Activated CD4-positive, alpha-beta memory T cell treated with anti-CD3 and anti-CD28 coated beads, Interleukin-2, amount 10 ng/mL, durations not matched to agents 7 days and 5 days (primary cell): ENCODE measurements at regions of chr2 and their contacts with region 1.

Region 1: GRCh38 chr2:191150600-191151330 is at the start of gene STAT4:
- DNase-seq: peak; percentile 84
- H3K4me3 Mint-ChIP-seq: peak within 1 kb of the TSS; percentile 94
- H3K27ac Mint-ChIP-seq: peak within 1 kb of the TSS; percentile 97
- H3K4me1 Mint-ChIP-seq: peaks cover 75% of the 10 kb centered on the region
- H3K27me3 Mint-ChIP-seq: no peaks in the 10 kb centered on the region
- total RNA-seq, gene STAT4: 122 to 124 TPM

Region 2: DNA sequence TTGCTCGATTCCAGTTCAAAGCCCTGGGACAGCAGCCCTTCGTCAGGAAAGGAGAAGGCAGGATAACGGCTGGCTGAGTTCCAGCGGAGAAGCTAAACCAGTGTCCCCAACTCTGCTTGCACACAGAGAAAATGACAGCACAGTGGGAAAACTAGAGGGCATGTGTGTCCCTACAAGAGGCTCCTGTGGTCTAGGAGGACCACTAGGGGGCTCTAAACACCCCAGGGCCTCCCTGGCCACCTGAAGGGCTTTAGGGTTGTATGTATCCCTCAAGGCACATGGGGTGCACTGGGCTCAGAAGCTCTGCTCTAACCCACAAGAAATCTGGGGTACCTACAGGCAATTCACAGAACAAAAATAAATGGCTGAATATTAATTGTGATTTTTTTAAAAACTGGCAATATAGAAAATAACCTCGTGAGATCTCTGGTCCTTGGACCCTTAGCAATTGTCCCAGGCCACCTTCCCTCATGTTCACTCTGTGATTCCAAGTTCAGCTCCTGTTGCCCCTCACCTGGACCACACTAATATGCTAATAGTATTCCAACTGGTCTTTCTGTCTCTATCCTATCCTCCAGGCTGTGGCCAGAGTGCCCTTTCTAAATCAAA is 154.3 kb before region 1 on chr2:
- CTCF ChIA-PET with region 1: interaction called, 10 read pairs
- POLR2A ChIA-PET with region 1: no interaction called
- DNase-seq: peak; percentile 34
- H3K4me3 Mint-ChIP-seq: no peak overlapping the region
- H3K27ac Mint-ChIP-seq: peak overlapping the region; percentile 71
- H3K4me1 Mint-ChIP-seq: peaks cover 80% of the 10 kb centered on the region
- H3K27me3 Mint-ChIP-seq: no peaks in the 10 kb centered on the region

Region 3: DNA sequence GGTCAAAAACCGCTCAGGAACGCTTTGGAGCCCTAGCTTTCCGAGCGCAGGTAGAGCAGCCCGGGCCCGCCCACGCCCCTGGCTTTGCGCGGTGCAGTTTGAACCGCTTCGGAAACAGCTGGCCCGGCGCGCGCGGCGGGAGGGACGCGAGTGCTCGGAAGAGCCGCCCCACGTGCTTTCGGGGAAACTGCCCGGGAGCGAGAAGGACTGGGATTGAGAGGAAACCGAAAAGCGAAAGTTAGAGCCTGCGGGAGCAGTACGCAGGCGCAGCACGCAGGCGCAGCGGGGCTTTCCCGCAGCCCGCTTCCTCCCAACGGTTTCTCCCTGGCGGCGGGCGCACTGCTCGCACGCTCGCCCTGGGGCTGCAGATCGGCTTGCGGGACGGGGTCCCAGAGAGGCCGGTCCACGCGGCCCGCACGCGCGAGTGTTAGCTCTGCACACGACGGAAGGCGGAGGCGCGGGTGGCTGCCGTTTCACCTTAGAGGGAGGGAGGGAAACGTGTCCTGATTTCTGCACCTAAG is 130.5 kb before region 1 on chr2:
- CTCF ChIA-PET with region 1: interaction called, 10 read pairs
- POLR2A ChIA-PET with region 1: interaction called, 26 read pairs
- DNase-seq: peak; percentile 95
- H3K4me3 Mint-ChIP-seq: no peak overlapping the region
- H3K27ac Mint-ChIP-seq: no peak overlapping the region
- H3K4me1 Mint-ChIP-seq: peaks cover 41% of the 10 kb centered on the region
- H3K27me3 Mint-ChIP-seq: no peaks in the 10 kb centered on the region

Region 4: GRCh38 chr2:191038241-191038725 is 112.5 kb before region 1 on chr2:
- CTCF ChIA-PET with region 1: interaction called, 23 read pairs
- POLR2A ChIA-PET with region 1: interaction called, 6 read pairs
- DNase-seq: peak; percentile 69
- H3K4me3 Mint-ChIP-seq: peak overlapping the region; percentile 29
- H3K27ac Mint-ChIP-seq: peak overlapping the region; percentile 88
- H3K4me1 Mint-ChIP-seq: peaks cover 49% of the 10 kb centered on the region
- H3K27me3 Mint-ChIP-seq: no peaks in the 10 kb centered on the region

Region 5: DNA sequence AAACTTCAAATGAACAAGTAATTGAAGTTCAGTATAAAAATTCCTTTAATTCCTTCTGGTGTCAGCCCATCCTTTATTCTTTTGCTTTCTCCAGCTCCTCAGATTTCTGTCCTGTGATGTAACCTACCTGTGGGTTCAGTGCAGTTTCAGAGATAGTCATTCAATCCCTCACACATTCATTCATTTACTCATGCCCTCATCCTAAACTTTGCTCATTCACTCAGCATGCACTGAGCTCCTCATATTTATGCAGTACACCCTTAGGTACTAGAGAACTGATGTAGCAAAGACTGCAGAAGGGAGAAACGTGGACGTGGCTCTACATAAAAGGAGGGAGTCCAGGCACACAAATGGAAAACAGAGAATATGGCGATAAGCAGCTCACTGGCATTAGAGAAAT is 91.5 kb before region 1 on chr2:
- CTCF ChIA-PET with region 1: interaction called, 512 read pairs
- POLR2A ChIA-PET with region 1: interaction called, 165 read pairs
- DNase-seq: no peak
- H3K4me3 Mint-ChIP-seq: no peak overlapping the region
- H3K27ac Mint-ChIP-seq: no peak overlapping the region
- H3K4me1 Mint-ChIP-seq: peaks cover 72% of the 10 kb centered on the region
- H3K27me3 Mint-ChIP-seq: no peaks in the 10 kb centered on the region

Region 6: DNA sequence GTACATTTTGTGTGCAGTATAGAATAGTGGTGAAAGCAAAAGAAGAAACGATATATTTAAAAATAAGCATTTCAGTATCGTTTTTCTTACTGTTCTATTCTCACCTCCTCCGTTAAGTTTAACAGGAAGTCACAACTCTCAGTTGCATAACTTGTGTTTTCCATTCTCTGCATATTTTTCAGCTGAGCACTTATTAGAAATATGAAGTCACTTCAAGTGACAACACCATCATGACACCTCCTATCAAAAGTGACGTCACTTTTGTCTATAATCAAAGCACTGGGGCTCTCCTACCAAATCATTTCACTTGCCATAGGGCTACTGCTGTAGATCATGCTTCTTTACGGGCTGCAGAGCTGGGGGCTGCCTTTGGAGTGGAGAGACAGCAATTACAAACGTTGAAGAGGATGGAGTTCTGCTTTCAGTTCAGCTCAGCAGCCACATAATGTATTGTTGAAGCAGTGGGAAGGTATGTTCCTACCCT is 36.3 kb before region 1 on chr2:
- CTCF ChIA-PET with region 1: interaction called, 18 read pairs
- POLR2A ChIA-PET with region 1: interaction called, 64 read pairs
- DNase-seq: peak; percentile 39
- H3K4me3 Mint-ChIP-seq: peak overlapping the region; percentile 61
- H3K27ac Mint-ChIP-seq: peak overlapping the region; percentile 94
- H3K4me1 Mint-ChIP-seq: peaks cover 71% of the 10 kb centered on the region
- H3K27me3 Mint-ChIP-seq: no peaks in the 10 kb centered on the region

Region 7: DNA sequence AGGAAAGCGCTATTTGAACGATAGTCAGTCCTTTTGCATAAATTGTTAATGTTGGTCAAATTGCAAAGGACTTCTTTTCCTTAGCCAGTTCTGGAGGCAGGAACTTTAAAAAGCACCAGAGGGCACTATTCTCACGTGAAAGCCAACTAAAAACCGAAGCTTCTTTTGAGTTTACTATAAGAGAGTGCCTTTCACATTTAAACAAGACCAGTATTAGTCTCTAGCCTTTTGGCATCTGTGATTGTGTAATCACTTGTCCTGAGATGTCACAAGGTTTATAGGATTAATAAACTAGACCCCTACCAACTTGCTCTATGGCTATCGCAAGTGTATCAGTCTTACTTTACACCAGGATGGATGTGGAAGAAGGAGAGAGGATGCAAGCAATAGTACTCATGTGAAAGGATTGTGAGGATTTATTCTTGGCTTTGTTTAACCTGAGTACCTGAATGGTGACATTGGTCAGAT is 14.4 kb after region 1 on chr2:
- CTCF ChIA-PET with region 1: interaction called, 14 read pairs
- POLR2A ChIA-PET with region 1: no interaction called
- DNase-seq: no peak
- H3K4me3 Mint-ChIP-seq: no peak overlapping the region
- H3K27ac Mint-ChIP-seq: no peak overlapping the region
- H3K4me1 Mint-ChIP-seq: peaks cover 12% of the 10 kb centered on the region
- H3K27me3 Mint-ChIP-seq: peaks cover 11% of the 10 kb centered on the region

Region 8: DNA sequence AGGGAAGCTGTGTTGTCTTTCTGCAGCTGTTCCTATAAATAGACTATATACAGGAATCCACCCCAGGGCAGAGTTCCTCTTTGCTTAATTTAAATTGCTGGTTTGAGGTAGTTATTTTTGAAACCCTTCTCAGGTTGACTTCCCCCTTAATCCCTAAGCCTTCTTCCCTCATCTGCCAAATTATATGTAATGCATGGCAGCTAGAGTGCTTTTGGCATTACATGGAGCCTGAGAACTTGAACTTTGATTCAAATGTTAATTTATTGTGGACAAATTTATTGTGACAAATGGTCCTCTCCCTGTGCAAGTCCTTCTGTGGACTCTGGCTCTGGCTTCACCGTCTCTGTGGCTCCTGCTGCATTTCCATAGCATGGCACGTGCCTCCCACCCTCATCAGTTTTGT is 123.6 kb after region 1 on chr2:
- CTCF ChIA-PET with region 1: no interaction called
- POLR2A ChIA-PET with region 1: no interaction called
- DNase-seq: no peak
- H3K4me3 Mint-ChIP-seq: no peak overlapping the region
- H3K27ac Mint-ChIP-seq: no peak overlapping the region
- H3K4me1 Mint-ChIP-seq: no peaks in the 10 kb centered on the region
- H3K27me3 Mint-ChIP-seq: no peaks in the 10 kb centered on the region